Left ventricle myocardium superior (tissue), 1 donor: ENCODE measurements at regions of chr4 and their contacts with region 1.

Region 1: DNA sequence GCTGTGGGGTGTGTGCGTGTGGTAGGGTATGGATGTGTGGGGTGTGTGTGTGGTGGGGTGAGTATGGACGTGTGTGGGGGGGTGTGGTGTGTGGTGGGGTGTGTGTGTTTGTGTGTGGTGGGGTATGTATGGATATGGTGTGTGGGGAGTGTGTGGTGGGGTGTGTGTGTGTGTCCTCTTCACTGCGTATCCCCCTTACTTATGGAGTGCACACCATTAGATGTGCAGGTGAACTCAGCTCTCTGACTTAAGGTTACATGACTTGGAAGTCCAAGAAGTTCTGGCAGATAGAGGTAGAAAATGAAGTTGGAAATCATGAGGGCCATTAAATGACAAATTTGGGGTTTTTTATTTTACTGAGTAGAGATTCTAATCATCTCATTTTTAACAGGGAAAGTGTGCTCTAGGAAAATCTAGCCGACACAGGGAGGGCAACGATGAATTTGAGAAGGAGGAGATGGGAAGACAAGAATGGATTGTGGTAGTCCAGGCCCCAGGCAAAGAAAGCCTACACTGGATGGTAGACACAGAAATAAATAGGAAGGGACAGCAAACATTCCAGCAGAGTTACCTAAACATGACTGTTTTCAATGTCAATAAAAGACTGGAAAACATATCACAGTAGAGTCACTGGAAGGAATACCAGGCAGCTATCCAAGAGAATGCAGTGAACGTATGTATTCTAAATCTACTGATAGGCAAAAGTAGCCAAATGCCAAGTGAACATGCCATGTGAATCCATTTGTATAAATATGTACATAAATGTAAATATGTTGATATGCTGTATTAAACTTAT is 182.7 kb downstream of the PALLD start:
- DNase-seq: no peak
- ATAC-seq: peak; percentile 13

Region 2: DNA sequence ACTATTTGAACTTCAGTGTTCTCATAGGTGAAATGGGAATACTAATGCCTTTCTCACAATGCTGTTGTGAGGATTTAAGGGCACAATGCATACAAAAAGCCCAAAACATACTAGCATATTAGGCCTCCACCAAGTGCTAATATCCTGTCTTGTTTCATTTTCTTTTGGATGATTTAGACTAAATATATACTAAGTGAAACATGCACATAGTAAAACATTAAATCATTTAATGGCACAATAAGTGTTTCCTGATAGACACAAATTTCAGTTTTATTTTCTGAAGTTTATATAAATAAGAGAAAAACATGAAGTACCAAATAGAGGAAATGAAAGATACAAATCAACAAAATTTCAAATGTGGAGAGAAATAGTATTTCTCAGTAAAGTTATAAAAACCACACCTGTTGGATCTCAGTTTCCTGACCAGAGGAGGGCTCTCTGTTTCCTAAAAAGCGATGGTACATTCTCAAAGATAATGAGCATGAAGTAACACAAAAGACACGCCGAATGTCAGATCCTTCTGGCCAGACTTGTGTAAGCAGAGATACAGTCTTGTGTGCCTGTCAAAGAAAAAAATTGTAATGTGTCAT is 386.1 kb before region 1 on chr4:
- intact Hi-C with region 1: loop called (anchors 10 kb)
- DNase-seq: no peak
- ATAC-seq: no peak

Region 3: GRCh38 chr4:168955674-168956073 is 276.1 kb after region 1 on chr4:
- intact Hi-C with region 1: no loop called
- DNase-seq: no peak
- ATAC-seq: no peak